CD8-positive, alpha-beta T cell (primary cell): ENCODE measurements at regions of chr7 and their contacts with region 1.

Region 1: DNA sequence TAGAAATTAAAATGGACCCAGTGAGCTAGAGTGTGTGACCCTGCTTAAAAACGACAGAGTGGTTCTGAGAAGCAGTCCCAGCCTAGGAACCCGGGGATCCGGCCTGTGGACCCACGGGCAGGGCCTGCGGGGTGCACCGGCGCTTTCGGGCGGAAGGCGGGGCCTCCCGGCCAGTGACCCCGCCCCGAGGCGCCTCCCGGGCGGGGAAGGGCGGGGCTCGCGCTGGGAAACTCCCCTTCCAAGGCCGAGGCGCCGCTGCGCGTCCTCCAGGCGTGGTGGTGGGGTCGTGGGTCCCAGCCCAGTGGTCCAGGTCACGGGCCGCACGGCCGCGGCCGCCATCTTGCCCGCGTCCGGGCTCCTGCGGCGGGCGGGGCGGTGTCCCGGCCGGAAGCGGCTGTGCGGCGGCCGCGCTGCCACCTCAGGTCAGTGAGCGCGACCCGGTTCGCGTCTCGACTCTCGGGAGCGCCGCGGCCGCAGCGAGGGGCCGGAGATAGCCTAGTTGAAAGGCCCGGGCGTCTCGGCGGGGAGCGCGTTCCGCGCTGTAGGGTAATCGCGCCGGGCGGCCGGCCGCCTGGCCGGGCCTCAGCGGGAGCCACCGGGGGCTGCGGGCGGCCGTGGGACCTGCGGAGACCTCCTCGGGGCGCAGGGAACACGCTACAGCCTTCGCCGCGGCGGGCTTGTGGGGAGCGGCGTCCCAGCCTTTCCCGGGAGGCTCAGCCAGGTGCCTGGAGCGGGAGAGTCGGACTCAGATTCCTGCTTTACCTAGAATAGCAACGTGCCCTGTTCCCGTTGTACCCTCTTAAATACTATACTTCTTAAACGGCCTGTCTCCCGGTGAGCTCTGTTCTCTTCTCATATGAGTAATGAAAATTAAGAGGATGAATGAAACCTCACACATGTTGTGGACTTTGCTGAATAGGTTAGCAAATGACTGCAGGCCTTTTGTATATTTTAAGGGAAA is at the start of gene MIOS:
- DNase-seq: peak; percentile 65 to 92 (median 77)
- ATAC-seq: peak; percentile 90
- H3K4me3 ChIP-seq: peak within 1 kb of the TSS; percentile 62 to 73
- H3K4me3 Mint-ChIP-seq: peak within 1 kb of the TSS; percentile 78
- H3K27ac ChIP-seq: peak within 1 kb of the TSS; percentile 83
- H3K27ac Mint-ChIP-seq: peak within 1 kb of the TSS; percentile 92
- H3K4me1 ChIP-seq: peaks cover 34% of the 10 kb centered on the region
- H3K4me1 Mint-ChIP-seq: peaks cover 35% of the 10 kb centered on the region
- H3K27me3 ChIP-seq: no peaks in the 10 kb centered on the region
- H3K27me3 Mint-ChIP-seq: no peaks in the 10 kb centered on the region
- CTCF ChIP-seq: no peak
- total RNA-seq, gene MIOS: 35.1 to 36.8 TPM

Region 2: GRCh38 chr7:7257899-7258692 is 308.8 kb before region 1 on chr7:
- CTCF ChIA-PET with region 1: no interaction called
- POLR2A ChIA-PET with region 1: no interaction called
- intact Hi-C with region 1: loop called in 1 of 2 experiments (anchors 2 kb)
- DNase-seq: peak in 2 of 9 experiments; percentile 42 to 63
- ATAC-seq: peak; percentile 54
- H3K4me3 ChIP-seq: peak overlapping the region in 1 of 2 experiments; percentile 58
- H3K4me3 Mint-ChIP-seq: peak overlapping the region; percentile 70
- H3K27ac ChIP-seq: peak overlapping the region; percentile 64 to 95
- H3K27ac Mint-ChIP-seq: peak overlapping the region; percentile 88
- H3K4me1 ChIP-seq: peaks cover 27% of the 10 kb centered on the region
- H3K4me1 Mint-ChIP-seq: peaks cover 41% of the 10 kb centered on the region
- H3K27me3 ChIP-seq: no peaks in the 10 kb centered on the region
- H3K27me3 Mint-ChIP-seq: no peaks in the 10 kb centered on the region
- CTCF ChIP-seq: no peak

Region 3: GRCh38 chr7:7274782-7275181 is 292.1 kb before region 1 on chr7:
- CTCF ChIA-PET with region 1: no interaction called
- POLR2A ChIA-PET with region 1: no interaction called
- intact Hi-C with region 1: no loop called
- DNase-seq: no peak
- ATAC-seq: no peak
- H3K4me3 ChIP-seq: no peak overlapping the region
- H3K4me3 Mint-ChIP-seq: no peak overlapping the region
- H3K27ac ChIP-seq: no peak overlapping the region
- H3K27ac Mint-ChIP-seq: no peak overlapping the region
- H3K4me1 ChIP-seq: no peaks in the 10 kb centered on the region
- H3K4me1 Mint-ChIP-seq: no peaks in the 10 kb centered on the region
- H3K27me3 ChIP-seq: no peaks in the 10 kb centered on the region
- H3K27me3 Mint-ChIP-seq: peaks cover 2% of the 10 kb centered on the region
- CTCF ChIP-seq: no peak

Region 4: GRCh38 chr7:7640221-7641128 is 73.5 kb after region 1 on chr7 and contains the start of gene UMAD1:
- CTCF ChIA-PET with region 1: no interaction called
- POLR2A ChIA-PET with region 1: interaction called, 5 read pairs
- intact Hi-C with region 1: loop called (anchors 1 kb)
- DNase-seq: peak; percentile 96 to 100 (median 98)
- ATAC-seq: peak; percentile 87
- H3K4me3 ChIP-seq: peak within 1 kb of the TSS; percentile 84 to 94
- H3K4me3 Mint-ChIP-seq: peak within 1 kb of the TSS; percentile 97
- H3K27ac ChIP-seq: peak within 1 kb of the TSS; percentile 96 to 97
- H3K27ac Mint-ChIP-seq: peak within 1 kb of the TSS; percentile 96
- H3K4me1 ChIP-seq: peaks cover 22% of the 10 kb centered on the region
- H3K4me1 Mint-ChIP-seq: peaks cover 46% of the 10 kb centered on the region
- H3K27me3 ChIP-seq: no peaks in the 10 kb centered on the region
- H3K27me3 Mint-ChIP-seq: no peaks in the 10 kb centered on the region
- CTCF ChIP-seq: no peak
- total RNA-seq, gene UMAD1: 11.1 to 11.2 TPM

Region 5: GRCh38 chr7:7681179-7681935 is 114.4 kb after region 1 on chr7:
- CTCF ChIA-PET with region 1: no interaction called
- POLR2A ChIA-PET with region 1: no interaction called
- intact Hi-C with region 1: no loop called
- DNase-seq: peak in 6 of 9 experiments; percentile 6 to 76 (median 41)
- ATAC-seq: peak; percentile 84
- H3K4me3 ChIP-seq: no peak overlapping the region
- H3K4me3 Mint-ChIP-seq: no peak overlapping the region
- H3K27ac ChIP-seq: peak overlapping the region in 1 of 2 experiments; percentile 2
- H3K27ac Mint-ChIP-seq: peak overlapping the region; percentile 70
- H3K4me1 ChIP-seq: peaks cover 14% of the 10 kb centered on the region
- H3K4me1 Mint-ChIP-seq: peaks cover 36% of the 10 kb centered on the region
- H3K27me3 ChIP-seq: no peaks in the 10 kb centered on the region
- H3K27me3 Mint-ChIP-seq: no peaks in the 10 kb centered on the region
- CTCF ChIP-seq: peak; percentile 81